Calu3 (cell line): ENCODE measurements at regions of chr1 and their contacts with region 1.

Region 1: GRCh38 chr1:21289700-21290545 is at the start of gene ECE1:
- DNase-seq: peak; percentile 50
- H3K4me3 Mint-ChIP-seq: peak within 1 kb of the TSS; percentile 76
- H3K27ac Mint-ChIP-seq: peak within 1 kb of the TSS; percentile 36
- H3K4me1 Mint-ChIP-seq: peaks cover 28% of the 10 kb centered on the region
- H3K27me3 Mint-ChIP-seq: no peaks in the 10 kb centered on the region
- CTCF ChIP-seq: no peak
- total RNA-seq, gene ECE1: 83.0 and 101 TPM in 2 replicates

Region 2: GRCh38 chr1:21334214-21335087 is 44.5 kb after region 1 on chr1:
- CTCF ChIA-PET with region 1: interaction called, 4 read pairs
- intact Hi-C with region 1: loop called (anchors 5 kb)
- DNase-seq: peak; percentile 68
- H3K4me3 Mint-ChIP-seq: peak overlapping the region; percentile 70
- H3K27ac Mint-ChIP-seq: peak overlapping the region; percentile 96
- H3K4me1 Mint-ChIP-seq: peaks cover 48% of the 10 kb centered on the region
- H3K27me3 Mint-ChIP-seq: no peaks in the 10 kb centered on the region
- CTCF ChIP-seq: peak; percentile 73